GM18951 (cell line): ENCODE measurements at regions of chr14 and their contacts with region 1.

Region 1: DNA sequence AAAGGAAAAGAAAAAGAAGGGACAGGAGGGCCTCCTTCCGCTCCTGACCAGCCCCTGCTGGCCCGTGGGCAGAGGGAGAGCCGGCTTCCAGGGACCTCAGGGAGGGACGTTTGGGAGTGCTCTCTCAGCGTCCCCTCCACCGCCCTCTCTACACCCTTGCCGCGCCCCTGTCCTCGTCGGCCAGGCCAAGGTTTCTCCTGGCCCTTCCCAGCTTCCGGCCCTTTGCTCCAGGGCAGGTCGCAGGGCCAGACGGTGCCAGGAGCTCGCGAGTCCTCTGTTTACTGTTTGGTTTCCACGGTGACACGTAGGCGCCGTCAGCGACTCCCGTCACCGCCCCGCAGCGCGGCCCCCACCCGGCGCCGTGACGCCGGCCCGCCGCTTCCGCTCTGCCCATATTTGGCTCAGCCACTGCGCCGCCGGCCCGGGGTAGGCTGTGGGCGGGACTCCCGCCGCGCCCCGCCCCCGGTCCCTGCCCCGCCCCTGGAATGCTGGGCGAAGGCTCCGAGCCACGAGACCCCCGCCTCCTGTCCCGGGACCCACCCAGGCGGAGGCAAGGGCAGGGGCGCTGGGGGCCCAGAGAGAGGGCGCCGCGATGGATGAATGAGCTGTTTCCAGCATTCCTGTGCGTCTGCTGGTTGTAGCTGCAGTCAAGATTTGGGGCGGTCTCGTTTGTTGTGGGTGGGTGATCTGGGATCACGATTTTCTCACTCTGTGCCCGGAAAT is 15.5 kb downstream of the FOS start:
- POLR2A ChIP-seq: no peak

Region 2: DNA sequence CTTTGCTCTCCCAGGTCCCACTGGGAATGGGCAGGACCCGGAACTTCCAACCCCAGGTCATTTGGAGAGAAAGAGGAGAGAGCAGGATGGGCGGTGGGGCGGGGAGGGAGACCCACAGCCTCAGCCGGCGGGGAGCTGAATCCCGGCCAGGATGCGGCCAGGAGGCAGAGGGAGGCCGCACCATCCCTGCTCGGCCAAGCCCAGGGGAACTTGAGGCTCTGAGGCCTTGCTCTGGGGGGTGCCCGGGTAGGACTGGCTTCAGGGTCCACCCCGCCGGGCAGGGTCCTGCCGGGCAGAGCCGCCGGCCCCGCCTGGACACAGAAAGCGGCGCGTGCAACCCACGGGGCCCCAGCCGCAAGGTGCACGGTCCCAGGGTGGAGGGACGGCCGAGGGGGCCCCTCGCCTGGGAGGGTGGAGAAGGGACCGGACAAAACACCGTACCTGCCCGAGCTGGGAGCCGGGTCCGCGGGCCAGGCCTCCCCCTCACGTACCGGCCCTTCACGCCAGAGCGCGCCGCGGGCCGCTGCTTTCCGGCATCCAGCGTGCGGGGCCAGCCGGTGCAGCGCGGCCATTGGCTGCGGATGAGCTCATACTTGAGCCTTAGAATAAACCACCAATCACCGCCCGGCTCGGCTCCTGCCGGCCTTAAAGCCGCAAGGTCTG is 371.2 kb before region 1 on chr14 and contains the start of gene RPS6KL1:
- in situ Hi-C with region 1: loop called (anchors 25 kb)
- POLR2A ChIP-seq: peak; percentile 55